HEK293 (cell line): ENCODE measurements at regions of chr3 and their contacts with region 1.

Region 1: GRCh38 chr3:184005941-184006507 is 11.7 kb downstream of the ABCC5 start:
- H3K4me3 ChIP-seq: no peak overlapping the region
- H3K27ac ChIP-seq: no peak overlapping the region; the same call in 1 of the 2 replicates
- H3K4me1 ChIP-seq: peaks cover 3% of the 10 kb centered on the region; the same call in 1 of the 2 replicates
- CTCF ChIP-seq: no peak

Region 2: GRCh38 chr3:184016811-184017671 is 11.0 kb after region 1 on chr3:
- CTCF ChIA-PET with region 1: interaction called, 16 read pairs
- POLR2A ChIA-PET with region 1: interaction called, 9 read pairs
- H3K4me3 ChIP-seq: peak overlapping the region; percentile 100
- H3K27ac ChIP-seq: peak overlapping the region; percentile 51; the same call in 1 of the 2 replicates
- H3K4me1 ChIP-seq: no peaks in the 10 kb centered on the region
- CTCF ChIP-seq: peak; percentile 76